Activated naive CD4-positive, alpha-beta T cell treated with anti-CD3 and anti-CD28 coated beads for 36 hours (primary cell): ENCODE measurements at regions of chr18 and their contacts with region 1.

Region 1: DNA sequence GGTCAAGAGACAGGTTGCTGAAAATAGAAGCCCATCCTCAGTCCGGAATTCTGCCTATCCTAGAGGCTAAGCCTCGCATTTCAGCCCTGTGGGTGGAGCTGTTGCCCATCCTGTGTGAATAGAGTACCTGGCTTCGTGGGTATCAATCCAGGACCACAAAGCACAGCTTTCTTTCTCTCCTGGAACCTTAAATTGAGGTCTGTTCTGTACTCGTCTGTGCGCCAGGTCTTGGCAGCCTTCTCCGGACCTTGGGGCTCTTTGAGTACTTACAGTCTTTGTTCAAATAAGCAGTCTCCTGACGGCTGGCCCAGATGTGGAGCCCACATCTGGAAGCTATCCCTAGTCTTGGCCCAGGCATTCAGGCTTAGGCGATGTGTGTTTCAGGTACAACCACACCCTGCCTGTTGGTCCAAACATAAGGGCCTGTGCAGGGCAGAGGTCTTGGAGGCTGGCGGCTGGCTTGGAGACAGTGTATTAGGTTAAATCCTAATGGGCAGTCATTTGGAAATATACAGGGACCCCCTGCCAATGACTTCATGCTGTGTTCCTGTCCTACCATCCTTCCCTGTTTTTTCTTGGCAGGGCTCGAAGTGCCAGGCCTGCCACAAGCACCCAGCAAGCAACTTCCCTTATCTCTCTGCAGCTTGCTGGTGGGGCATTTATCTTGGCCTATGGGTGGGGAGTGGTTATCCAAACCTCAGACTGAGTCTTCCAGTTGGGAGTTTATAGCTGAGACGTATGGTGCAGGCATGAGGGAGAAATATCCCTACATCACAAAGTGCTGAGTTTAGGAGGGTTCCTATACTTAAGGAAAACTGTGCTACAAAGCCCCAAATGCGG is 294.1 kb downstream of the BCL2 start:
- DNase-seq: peak; percentile 18
- H3K4me3 Mint-ChIP-seq: no peak overlapping the region
- H3K27ac Mint-ChIP-seq: no peak overlapping the region
- H3K4me1 Mint-ChIP-seq: no peaks in the 10 kb centered on the region
- H3K27me3 Mint-ChIP-seq: no peaks in the 10 kb centered on the region

Region 2: DNA sequence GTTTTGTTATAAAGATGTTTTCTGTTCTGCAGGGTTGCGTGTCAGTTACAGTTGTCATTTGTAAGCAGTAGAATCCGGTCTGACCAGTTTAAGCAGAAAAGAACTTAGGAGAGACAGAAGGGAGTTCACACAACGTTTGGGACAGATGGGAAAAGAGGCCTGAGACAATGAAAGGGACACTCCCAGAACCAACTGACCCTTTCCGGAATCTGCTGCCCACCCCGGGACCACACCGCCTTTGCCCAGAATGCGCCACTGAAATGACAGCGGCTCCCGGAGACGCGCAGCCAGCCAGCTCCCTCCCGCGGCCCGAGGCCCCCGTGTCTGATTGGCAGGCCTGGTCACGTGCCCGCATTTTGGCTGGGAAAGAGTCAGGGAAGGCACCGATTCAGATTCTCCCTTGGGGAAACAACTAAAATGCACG is 49.5 kb after region 1 on chr18:
- CTCF ChIA-PET with region 1: interaction called, 4 read pairs
- intact Hi-C with region 1: loop called (anchors 1 kb)
- DNase-seq: peak; percentile 83
- H3K4me3 Mint-ChIP-seq: peak overlapping the region; percentile 79
- H3K27ac Mint-ChIP-seq: no peak overlapping the region
- H3K4me1 Mint-ChIP-seq: peaks cover 9% of the 10 kb centered on the region
- H3K27me3 Mint-ChIP-seq: peaks cover 2% of the 10 kb centered on the region